ENCODE measurements at regions of chr21 and their contacts with region 1.

Region 1: GRCh38 chr21:38805328-38806152 is at the start of gene ETS2:
- DNase-seq: peak; percentile 84
- ATAC-seq: peak; percentile 84
- H3K4me3 Mint-ChIP-seq: peak within 1 kb of the TSS; percentile 92
- H3K27ac Mint-ChIP-seq: peak within 1 kb of the TSS; percentile 91
- H3K4me1 Mint-ChIP-seq: peaks cover 33% of the 10 kb centered on the region
- H3K27me3 Mint-ChIP-seq: peaks cover 3% of the 10 kb centered on the region
- CTCF ChIP-seq: no peak
- total RNA-seq, gene ETS2: 28.1 to 29.7 TPM

Region 2: DNA sequence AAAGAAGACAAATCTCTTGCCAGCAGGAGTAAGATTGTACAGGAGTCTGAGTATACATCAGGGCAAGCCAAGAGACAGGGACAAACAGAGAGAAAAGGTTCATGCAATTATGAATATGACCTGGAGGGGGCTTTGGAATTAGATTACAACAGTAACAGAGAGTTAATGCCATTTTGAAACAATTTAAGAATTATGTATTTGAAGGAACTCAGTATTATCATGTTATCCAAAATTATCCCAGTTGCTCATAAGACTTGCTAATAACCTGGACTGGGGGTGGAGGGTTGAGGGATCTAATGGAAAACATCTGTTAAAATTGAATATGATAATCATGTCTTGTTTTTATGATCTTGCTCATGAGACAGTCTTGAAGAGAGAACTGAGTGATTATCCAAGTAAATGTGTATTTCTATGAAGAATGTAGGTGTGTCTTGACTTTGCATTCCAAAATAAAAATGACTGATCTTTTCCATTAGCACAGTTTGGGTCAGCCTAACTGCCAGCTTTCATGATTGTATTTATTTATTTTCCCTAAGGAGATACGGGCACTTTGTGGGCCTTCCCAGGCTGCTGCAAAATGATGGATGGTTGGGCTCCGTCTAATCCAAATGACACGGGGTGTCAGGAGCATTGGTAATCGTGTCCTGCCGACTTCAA is 424.9 kb before region 1 on chr21:
- CTCF ChIA-PET with region 1: no interaction called
- POLR2A ChIA-PET with region 1: no interaction called
- intact Hi-C with region 1: no loop called
- DNase-seq: no peak
- ATAC-seq: no peak
- H3K4me3 Mint-ChIP-seq: no peak overlapping the region
- H3K27ac Mint-ChIP-seq: no peak overlapping the region
- H3K4me1 Mint-ChIP-seq: no peaks in the 10 kb centered on the region
- H3K27me3 Mint-ChIP-seq: peaks cover 11% of the 10 kb centered on the region
- CTCF ChIP-seq: peak; percentile 25

Region 3: GRCh38 chr21:38709876-38710275 is 95.7 kb before region 1 on chr21:
- CTCF ChIA-PET with region 1: no interaction called
- POLR2A ChIA-PET with region 1: no interaction called
- intact Hi-C with region 1: no loop called
- DNase-seq: no peak
- ATAC-seq: no peak
- H3K4me3 Mint-ChIP-seq: no peak overlapping the region
- H3K27ac Mint-ChIP-seq: no peak overlapping the region
- H3K4me1 Mint-ChIP-seq: no peaks in the 10 kb centered on the region
- H3K27me3 Mint-ChIP-seq: peaks cover 3% of the 10 kb centered on the region
- CTCF ChIP-seq: no peak

Region 4: DNA sequence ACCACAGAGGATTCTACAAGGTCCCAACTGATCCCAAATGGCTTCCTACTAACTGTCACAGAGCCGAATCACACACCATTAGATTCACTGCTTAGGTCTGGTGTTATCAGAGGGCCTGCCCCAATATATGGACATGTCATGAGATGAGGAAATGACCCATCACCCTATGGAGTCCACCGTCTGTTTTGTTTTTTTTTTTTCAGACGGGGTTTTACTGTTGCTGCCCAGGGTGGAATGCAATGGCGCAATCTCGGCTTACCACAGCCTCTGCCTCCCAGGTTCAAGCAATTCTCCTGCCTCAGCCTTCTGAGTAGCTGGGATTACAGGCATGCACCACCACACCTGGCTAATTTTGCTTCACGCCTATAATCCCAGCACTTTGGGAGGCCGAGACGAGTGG is 83.6 kb before region 1 on chr21:
- CTCF ChIA-PET with region 1: no interaction called
- POLR2A ChIA-PET with region 1: no interaction called
- intact Hi-C with region 1: no loop called
- DNase-seq: no peak
- ATAC-seq: no peak
- H3K4me3 Mint-ChIP-seq: no peak overlapping the region
- H3K27ac Mint-ChIP-seq: no peak overlapping the region
- H3K4me1 Mint-ChIP-seq: no peaks in the 10 kb centered on the region
- H3K27me3 Mint-ChIP-seq: no peaks in the 10 kb centered on the region
- CTCF ChIP-seq: no peak

Region 5: DNA sequence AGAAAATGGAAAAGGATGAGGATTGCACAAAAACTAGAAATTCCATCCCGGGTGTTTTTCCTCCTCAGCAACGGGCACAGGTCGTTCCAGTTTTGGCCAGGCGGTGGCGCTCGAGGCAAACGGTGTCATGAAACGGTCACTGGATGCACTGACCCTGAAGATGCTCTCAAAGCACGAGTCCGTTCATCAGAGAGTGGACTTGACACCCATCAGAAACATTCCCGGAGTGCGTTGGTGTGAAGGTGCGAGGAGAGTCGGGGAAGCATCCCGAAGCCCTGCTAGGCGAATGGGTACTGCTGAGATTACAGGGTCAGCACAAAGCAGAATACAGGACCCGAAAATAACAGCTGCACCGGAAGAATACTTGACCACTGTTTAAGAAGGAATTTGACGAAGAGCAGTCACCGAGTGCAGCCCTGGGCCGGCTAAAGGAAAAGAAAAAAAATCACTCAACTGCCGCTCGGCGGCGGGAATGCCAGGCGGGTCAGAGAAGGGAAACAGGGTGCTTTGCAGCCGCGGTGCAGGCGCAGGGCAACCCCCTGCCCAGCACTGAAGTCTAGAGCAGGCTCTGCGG is 71.5 kb before region 1 on chr21:
- CTCF ChIA-PET with region 1: interaction called, 6 read pairs
- POLR2A ChIA-PET with region 1: interaction called, 3 read pairs
- intact Hi-C with region 1: loop called (anchors 2 kb)
- DNase-seq: peak; percentile 79
- ATAC-seq: peak; percentile 71
- H3K4me3 Mint-ChIP-seq: peak overlapping the region; percentile 58
- H3K27ac Mint-ChIP-seq: no peak overlapping the region
- H3K4me1 Mint-ChIP-seq: peaks cover 12% of the 10 kb centered on the region
- H3K27me3 Mint-ChIP-seq: peaks cover 27% of the 10 kb centered on the region
- CTCF ChIP-seq: peak; percentile 97

Region 6: DNA sequence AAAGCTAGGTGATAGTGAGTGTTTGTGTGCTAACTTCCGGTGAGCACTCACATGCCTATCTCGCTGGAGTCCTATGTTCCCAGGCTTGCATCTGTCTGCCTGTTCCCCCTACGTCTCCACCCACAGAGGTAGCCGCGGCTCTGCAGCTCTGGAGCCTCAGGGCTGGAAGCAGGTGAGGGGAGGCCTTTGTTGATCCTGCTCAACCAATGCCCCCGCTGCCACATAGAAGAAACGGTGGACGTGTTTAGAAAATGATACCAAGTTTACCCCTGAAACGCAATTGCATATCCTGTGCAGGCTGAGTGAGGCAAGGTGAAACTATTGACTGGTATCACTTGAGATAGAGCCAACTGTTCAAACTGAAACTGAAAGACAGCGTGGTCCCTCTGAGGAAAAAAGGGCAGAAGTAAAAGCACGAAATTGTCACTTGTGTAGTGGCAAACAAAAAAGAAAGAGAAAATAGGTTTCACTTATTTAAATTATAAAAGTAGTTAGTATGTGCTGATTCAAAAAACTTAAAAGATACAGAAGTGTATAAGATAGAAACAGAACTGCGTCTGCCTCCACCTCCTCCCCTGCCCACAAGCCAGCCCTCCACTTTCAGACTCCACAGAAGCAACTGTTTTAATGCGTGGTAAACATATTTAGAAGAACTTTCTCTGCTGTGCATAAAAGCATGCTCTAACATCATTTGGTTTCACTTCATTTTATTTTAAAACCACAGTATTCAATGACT is 38.4 kb before region 1 on chr21:
- CTCF ChIA-PET with region 1: interaction called, 3 read pairs
- POLR2A ChIA-PET with region 1: interaction called, 14 read pairs
- intact Hi-C with region 1: loop called (anchors 5 kb)
- DNase-seq: peak; percentile 81
- ATAC-seq: peak; percentile 80
- H3K4me3 Mint-ChIP-seq: peak overlapping the region; percentile 64
- H3K27ac Mint-ChIP-seq: peak overlapping the region; percentile 95
- H3K4me1 Mint-ChIP-seq: peaks cover 40% of the 10 kb centered on the region
- H3K27me3 Mint-ChIP-seq: no peaks in the 10 kb centered on the region
- CTCF ChIP-seq: no peak

Region 7: DNA sequence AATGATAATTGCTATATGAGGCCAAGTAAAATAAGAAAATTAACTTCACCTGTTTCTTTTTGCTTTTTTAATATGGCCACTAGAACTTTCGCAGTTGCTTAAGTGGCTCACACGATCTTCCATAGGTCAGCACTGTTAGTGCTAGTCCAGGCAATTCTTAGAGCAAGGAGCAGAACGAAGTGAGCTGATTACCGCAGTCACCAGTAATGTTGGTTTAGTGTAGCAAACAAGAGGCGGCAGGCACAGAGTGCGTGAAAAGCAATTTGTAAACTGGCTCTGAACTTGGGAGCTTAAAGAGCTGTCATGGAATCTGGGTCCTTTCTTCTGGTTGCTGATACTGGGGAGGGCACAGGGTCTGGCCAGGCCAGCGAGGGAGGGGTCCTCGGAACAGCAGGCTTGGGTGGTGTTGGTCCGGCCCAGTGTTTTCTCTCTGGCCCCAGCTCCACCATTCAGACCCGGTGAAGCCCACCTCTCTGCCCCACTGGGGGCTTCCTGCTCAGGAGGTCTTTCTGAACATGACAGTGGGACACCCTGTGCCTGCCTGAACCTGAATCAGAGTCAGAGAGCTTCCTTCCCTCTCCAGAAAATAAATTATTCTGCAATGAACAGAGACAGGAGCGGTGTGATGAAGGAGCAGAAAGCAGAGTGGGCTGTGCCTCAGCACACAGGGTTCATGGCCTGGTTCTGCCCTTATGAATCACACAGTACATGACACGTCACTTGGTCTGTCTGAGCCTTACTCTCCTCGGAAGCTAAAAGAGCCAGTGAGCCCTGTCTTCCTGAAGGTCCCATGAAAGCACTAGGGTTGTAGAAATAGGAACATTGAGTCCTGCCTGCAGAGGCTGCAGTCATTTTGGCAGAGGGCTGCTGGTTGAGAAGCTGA is 12.1 kb after region 1 on chr21:
- CTCF ChIA-PET with region 1: interaction called, 3 read pairs
- POLR2A ChIA-PET with region 1: interaction called, 14 read pairs
- intact Hi-C with region 1: no loop called
- DNase-seq: no peak
- ATAC-seq: no peak
- H3K4me3 Mint-ChIP-seq: no peak overlapping the region
- H3K27ac Mint-ChIP-seq: no peak overlapping the region
- H3K4me1 Mint-ChIP-seq: no peaks in the 10 kb centered on the region
- H3K27me3 Mint-ChIP-seq: no peaks in the 10 kb centered on the region
- CTCF ChIP-seq: no peak

Measured in activated CD8-positive, alpha-beta T cell treated with anti-CD3 and anti-CD28 coated beads for 36 hours (primary cell).